AG04450 (cell line): ENCODE measurements at regions of chr12 and their contacts with region 1.

Region 1: DNA sequence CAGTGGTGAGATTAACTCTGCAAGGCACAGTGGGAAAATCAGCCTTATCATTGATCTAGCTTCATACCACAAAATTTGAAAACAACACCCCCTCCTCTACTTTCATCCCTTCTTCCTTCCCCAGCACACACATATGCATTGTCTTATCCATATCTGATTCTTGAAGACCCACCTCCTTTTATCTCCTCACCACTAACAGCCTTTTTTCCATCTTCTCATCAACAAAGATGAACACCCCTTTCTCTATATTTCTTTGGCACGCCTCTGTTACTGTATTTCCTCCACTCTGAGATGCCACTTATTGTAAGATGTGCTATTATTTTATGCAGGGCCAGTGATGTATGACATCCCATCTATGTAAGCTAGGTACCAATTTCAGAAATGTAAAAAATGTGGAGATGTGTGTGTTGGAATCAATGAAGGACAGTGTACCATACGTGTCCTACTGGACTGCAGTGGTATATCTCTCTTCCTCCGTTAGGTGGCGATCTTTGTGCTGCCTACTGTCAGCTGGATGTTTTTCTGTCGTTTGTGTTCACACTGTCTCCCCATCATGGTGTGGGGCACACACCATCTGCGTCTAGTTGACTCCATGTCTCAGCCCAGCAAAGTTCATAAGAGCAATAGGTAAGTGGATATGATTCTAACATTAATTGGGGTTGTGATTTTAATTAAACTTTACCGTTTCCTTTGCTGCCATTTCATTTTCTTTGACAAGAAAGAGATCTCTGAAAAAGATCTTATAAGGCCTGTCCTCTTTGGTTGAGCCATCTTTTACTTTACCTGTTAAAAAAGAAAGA is 24.0 kb downstream of the CCDC38 start:
- DNase-seq: no peak
- H3K4me3 ChIP-seq: no peak overlapping the region
- H3K27ac ChIP-seq: no peak overlapping the region
- H3K27me3 ChIP-seq: peaks cover 11% of the 10 kb centered on the region
- CTCF ChIP-seq: peak; percentile 91

Region 2: DNA sequence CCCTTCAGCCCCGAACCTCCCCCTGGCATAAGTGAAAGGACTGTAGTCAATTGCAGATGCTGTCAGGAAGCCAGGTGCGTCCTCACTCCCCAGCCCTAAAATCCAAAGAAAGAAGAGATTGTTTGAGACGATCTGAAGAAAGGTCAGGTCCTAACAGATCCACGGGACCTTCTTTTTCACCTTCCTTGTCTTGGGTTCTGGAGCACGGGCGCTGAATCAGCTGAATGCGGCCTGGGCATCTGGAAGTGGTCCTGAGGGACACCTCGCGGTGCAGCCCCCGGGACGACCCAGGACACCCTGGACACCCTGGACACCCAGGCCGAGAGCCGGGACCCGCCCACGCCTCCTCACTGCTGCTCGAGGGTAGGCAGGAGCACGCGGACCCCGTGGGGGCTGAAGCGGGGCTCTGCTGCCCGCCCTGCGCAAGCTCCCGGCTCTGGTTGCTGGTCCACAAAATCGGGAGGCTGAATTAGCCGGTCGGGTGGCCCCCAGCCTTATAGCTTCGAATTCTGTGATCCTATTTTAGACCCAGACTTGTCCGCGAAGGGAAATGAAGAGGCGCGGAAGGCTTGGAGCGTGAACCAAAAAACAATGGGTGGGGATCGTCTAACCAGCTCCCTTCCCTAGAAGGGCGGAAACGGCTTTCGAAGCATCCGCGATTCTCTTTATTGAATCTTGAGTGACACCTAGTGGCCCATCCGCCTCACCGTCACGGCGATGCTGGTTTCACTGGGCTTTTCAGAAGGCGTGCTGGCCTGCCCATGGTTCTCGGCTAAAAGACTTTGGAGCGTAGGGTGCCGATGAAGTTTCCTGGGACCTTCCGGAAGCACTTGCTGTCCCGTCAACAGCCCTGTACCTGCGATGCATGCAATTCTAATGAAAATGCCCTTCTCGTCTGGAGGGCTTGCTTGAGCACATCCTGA is 1816.4 kb before region 1 on chr12:
- CTCF ChIA-PET with region 1: no interaction called
- POLR2A ChIA-PET with region 1: no interaction called
- DNase-seq: peak; percentile 73
- H3K4me3 ChIP-seq: peak overlapping the region; percentile 66
- H3K27ac ChIP-seq: peak overlapping the region; percentile 39
- H3K27me3 ChIP-seq: peaks cover 3% of the 10 kb centered on the region
- CTCF ChIP-seq: peak; percentile 80

Region 3: DNA sequence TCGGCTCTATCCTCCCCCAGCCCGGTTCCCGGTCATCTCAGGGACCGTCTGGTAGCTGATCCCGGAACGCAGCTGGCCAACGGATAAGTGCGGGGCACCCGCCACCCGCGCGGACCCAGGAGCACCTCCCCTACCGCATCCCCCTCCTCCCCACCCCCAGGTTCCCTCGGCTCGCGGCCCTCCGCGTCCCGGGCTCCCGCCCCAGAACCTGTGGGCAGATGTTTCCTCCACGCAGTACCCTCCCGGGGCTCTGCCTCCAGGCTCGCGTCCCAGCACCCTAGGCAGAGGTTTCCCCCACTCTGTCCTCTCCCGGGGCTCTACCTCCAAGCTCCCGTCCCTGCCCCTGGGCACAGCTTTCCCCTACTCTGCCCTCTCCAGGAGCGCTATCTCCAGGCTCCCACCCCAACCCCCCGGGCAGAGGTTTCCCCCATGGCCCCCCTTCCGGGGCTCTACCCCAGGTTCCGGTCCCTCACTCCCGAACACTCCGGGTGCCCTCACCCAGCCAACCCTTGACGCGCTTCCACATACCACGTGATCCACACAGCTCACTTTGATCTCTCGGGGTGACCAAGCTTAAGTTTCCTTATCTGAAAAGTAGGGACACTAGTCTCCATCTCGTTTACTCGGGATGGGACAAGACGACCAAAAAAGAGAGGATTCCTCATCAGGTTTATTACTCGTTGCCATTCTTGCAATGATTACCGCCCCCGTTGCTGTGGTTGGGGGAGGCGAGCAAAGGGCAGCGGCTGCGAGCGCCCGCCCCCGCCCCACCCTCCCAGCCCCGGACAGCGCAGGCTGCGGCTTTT is 24.3 kb after region 1 on chr12 and contains the start of gene CCDC38:
- CTCF ChIA-PET with region 1: interaction called, 17 read pairs
- POLR2A ChIA-PET with region 1: no interaction called
- DNase-seq: no peak
- H3K4me3 ChIP-seq: peak within 1 kb of the TSS; percentile 72
- H3K27ac ChIP-seq: no peak within 1 kb of the TSS
- H3K27me3 ChIP-seq: no peaks in the 10 kb centered on the region
- CTCF ChIP-seq: no peak
- polyA plus RNA-seq, gene CCDC38: not detected in 2 replicates

Region 4: GRCh38 chr12:95998611-95999286 is 80.4 kb after region 1 on chr12:
- CTCF ChIA-PET with region 1: interaction called, 61 read pairs
- POLR2A ChIA-PET with region 1: no interaction called
- DNase-seq: peak; percentile 10
- H3K4me3 ChIP-seq: no peak overlapping the region
- H3K27ac ChIP-seq: no peak overlapping the region
- H3K27me3 ChIP-seq: peaks cover 2% of the 10 kb centered on the region
- CTCF ChIP-seq: peak; percentile 65